Activated CD4-positive, alpha-beta T cell treated with anti-CD3 and anti-CD28 coated beads for 36 hours (primary cell): ENCODE measurements at regions of chr9 and their contacts with region 1.

Region 1: GRCh38 chr9:78035383-78035993 is 3.9 kb upstream of the GNAQ start:
- DNase-seq: peak; percentile 69
- ATAC-seq: peak; percentile 21
- H3K4me3 Mint-ChIP-seq: no peak overlapping the region
- H3K27ac Mint-ChIP-seq: no peak overlapping the region
- H3K4me1 Mint-ChIP-seq: peaks cover 30% of the 10 kb centered on the region
- H3K27me3 Mint-ChIP-seq: no peaks in the 10 kb centered on the region

Region 2: GRCh38 chr9:77433675-77434445 is 601.6 kb before region 1 on chr9:
- CTCF ChIA-PET with region 1: interaction called, 8 read pairs
- POLR2A ChIA-PET with region 1: no interaction called
- intact Hi-C with region 1: loop called (anchors 2 kb)
- DNase-seq: peak; percentile 77
- ATAC-seq: peak; percentile 99
- H3K4me3 Mint-ChIP-seq: no peak overlapping the region
- H3K27ac Mint-ChIP-seq: no peak overlapping the region
- H3K4me1 Mint-ChIP-seq: peaks cover 3% of the 10 kb centered on the region
- H3K27me3 Mint-ChIP-seq: no peaks in the 10 kb centered on the region

Region 3: GRCh38 chr9:77751341-77752091 is 284.0 kb before region 1 on chr9:
- CTCF ChIA-PET with region 1: interaction called, 7 read pairs
- POLR2A ChIA-PET with region 1: no interaction called
- intact Hi-C with region 1: loop called in 1 of 2 experiments (anchors 10 kb)
- DNase-seq: peak; percentile 34
- ATAC-seq: peak; percentile 71
- H3K4me3 Mint-ChIP-seq: no peak overlapping the region
- H3K27ac Mint-ChIP-seq: peak overlapping the region; percentile 52
- H3K4me1 Mint-ChIP-seq: peaks cover 39% of the 10 kb centered on the region
- H3K27me3 Mint-ChIP-seq: no peaks in the 10 kb centered on the region

Region 4: GRCh38 chr9:77977210-77977611 is 58.3 kb before region 1 on chr9:
- CTCF ChIA-PET with region 1: interaction called, 64 read pairs
- POLR2A ChIA-PET with region 1: interaction called, 6 read pairs
- intact Hi-C with region 1: loop called (anchors 1 kb)
- DNase-seq: peak; percentile 73
- ATAC-seq: peak; percentile 8
- H3K4me3 Mint-ChIP-seq: no peak overlapping the region
- H3K27ac Mint-ChIP-seq: peak overlapping the region; percentile 88
- H3K4me1 Mint-ChIP-seq: peaks cover 62% of the 10 kb centered on the region
- H3K27me3 Mint-ChIP-seq: no peaks in the 10 kb centered on the region

Region 5: GRCh38 chr9:78115073-78115472 is 79.6 kb after region 1 on chr9:
- CTCF ChIA-PET with region 1: interaction called, 13 read pairs
- POLR2A ChIA-PET with region 1: no interaction called
- intact Hi-C with region 1: loop called (anchors 2 to 5 kb)
- DNase-seq: no peak
- ATAC-seq: peak; percentile 21
- H3K4me3 Mint-ChIP-seq: no peak overlapping the region
- H3K27ac Mint-ChIP-seq: no peak overlapping the region
- H3K4me1 Mint-ChIP-seq: peaks cover 39% of the 10 kb centered on the region
- H3K27me3 Mint-ChIP-seq: no peaks in the 10 kb centered on the region

Region 6: DNA sequence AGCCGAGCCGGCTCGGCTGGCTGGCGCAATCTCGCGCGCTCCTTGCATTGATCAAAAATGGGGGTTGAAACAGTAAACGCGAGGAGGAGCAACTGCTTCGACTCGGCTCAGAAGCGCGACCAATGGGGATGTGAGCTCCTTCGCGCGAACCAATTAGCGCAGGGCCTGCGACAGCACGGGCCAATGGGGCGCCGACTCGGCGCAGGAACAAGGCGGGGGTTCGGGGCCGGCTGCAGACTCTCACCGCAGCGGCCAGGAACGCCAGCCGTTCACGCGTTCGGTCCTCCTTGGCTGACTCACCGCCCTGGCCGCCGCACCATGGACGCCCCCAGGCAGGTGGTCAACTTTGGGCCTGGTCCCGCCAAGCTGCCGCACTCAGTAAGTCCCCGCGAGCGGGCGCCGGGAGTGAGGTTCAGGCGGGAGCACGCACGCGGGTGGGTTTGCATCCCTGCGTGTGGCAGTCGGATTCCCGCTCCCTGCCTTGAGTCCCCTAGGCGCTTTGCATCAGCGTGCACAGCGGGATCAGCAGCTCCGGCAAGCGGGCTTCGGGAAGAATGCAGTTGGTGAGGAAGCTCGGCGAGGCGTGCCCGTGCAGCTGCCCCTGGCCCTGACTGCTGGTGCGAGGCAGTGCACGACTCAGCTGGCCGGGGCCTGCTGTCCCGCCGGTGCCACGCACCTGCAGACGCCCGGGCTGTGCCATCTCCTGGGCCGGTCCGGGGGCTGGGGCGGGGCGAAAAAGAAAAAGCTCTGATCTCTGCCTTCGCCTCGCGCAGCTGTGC is 261.6 kb after region 1 on chr9 and contains the start of gene PSAT1:
- CTCF ChIA-PET with region 1: interaction called, 13 read pairs
- POLR2A ChIA-PET with region 1: no interaction called
- intact Hi-C with region 1: loop called (anchors 2 to 5 kb)
- DNase-seq: peak; percentile 96
- ATAC-seq: peak; percentile 98
- H3K4me3 Mint-ChIP-seq: peak within 1 kb of the TSS; percentile 91
- H3K27ac Mint-ChIP-seq: peak within 1 kb of the TSS; percentile 97
- H3K4me1 Mint-ChIP-seq: peaks cover 29% of the 10 kb centered on the region
- H3K27me3 Mint-ChIP-seq: no peaks in the 10 kb centered on the region
- total RNA-seq, gene PSAT1: 145 to 190 TPM

Region 7: GRCh38 chr9:78654324-78654723 is 618.8 kb after region 1 on chr9:
- CTCF ChIA-PET with region 1: no interaction called
- POLR2A ChIA-PET with region 1: no interaction called
- intact Hi-C with region 1: no loop called
- DNase-seq: no peak
- ATAC-seq: no peak
- H3K4me3 Mint-ChIP-seq: no peak overlapping the region
- H3K27ac Mint-ChIP-seq: no peak overlapping the region
- H3K4me1 Mint-ChIP-seq: no peaks in the 10 kb centered on the region
- H3K27me3 Mint-ChIP-seq: no peaks in the 10 kb centered on the region